CD4-positive, alpha-beta T cell (primary cell): ENCODE measurements at regions of chr10 and their contacts with region 1.

Region 1: DNA sequence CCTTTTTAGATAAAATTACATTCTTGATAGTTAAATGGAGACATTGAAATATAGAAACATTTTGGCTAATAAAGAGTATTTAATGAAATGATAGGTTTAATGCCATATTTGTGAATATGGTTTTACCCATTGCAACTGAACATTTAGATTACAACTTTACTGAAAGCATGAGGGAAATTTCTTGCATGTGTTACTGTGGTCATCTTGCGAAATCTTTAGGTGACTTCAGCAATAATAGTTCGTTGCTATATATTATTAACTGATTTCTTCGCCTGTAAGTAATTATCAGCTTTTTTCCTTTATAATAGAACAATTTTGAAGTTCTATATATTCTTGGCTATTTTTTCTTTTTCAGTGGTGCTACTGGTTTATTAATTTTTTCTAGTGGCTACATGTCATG is 83.2 kb downstream of the MLLT10 start:
- DNase-seq: no peak
- ATAC-seq: no peak
- H3K4me3 ChIP-seq: no peak overlapping the region
- H3K4me3 Mint-ChIP-seq: no peak overlapping the region
- H3K27ac ChIP-seq: no peak overlapping the region
- H3K27ac Mint-ChIP-seq: no peak overlapping the region
- H3K4me1 ChIP-seq: peaks cover 7% of the 10 kb centered on the region
- H3K4me1 Mint-ChIP-seq: peaks cover 20% of the 10 kb centered on the region
- H3K27me3 ChIP-seq: no peaks in the 10 kb centered on the region
- H3K27me3 Mint-ChIP-seq: no peaks in the 10 kb centered on the region
- CTCF ChIP-seq: no peak

Region 2: GRCh38 chr10:21556527-21556926 is 60.7 kb before region 1 on chr10:
- CTCF ChIA-PET with region 1: no interaction called
- POLR2A ChIA-PET with region 1: no interaction called
- intact Hi-C with region 1: loop called in 1 of 2 experiments (anchors 10 kb)
- DNase-seq: no peak
- ATAC-seq: no peak
- H3K4me3 ChIP-seq: no peak overlapping the region
- H3K4me3 Mint-ChIP-seq: no peak overlapping the region
- H3K27ac ChIP-seq: no peak overlapping the region
- H3K27ac Mint-ChIP-seq: no peak overlapping the region
- H3K4me1 ChIP-seq: no peaks in the 10 kb centered on the region
- H3K4me1 Mint-ChIP-seq: peaks cover 45% of the 10 kb centered on the region
- H3K27me3 ChIP-seq: no peaks in the 10 kb centered on the region
- H3K27me3 Mint-ChIP-seq: no peaks in the 10 kb centered on the region
- CTCF ChIP-seq: no peak

Region 3: DNA sequence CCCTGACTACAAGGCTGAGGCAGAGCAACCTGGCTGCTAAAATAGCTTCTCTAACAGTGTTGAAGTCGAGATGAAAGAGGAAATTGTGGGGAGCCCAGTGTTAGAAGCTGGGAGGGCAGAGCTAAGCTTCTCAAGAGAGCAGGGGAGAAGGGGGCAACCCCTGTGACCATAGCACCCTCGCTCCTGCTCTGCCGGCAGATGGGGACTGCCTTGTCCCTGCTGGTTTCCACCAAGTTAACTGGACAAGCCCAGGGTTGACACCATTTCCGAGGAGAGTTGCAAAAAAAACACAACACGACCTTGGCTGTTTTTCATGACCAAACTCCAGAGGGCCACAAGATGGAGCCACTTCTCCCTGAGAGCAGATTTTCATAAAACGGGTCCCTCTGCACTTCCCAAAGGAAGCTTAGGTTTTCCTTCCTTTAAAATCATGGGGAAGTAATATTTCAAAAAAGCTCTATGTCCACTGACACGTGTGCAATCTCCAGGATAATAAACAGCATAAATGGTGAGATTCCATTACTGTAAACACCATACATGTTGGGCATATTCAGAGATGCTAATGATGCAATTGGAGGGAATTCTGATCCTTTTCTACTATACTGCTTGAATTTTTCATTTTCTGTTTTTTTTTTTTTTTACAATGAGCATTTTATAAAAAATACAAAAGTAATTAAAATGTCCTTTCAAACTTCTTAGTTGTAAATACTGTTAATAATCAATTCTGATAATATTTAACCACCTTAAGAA is 956.7 kb after region 1 on chr10:
- CTCF ChIA-PET with region 1: no interaction called
- POLR2A ChIA-PET with region 1: no interaction called
- intact Hi-C with region 1: no loop called
- DNase-seq: peak in 6 of 14 experiments; percentile 8 to 69 (median 50)
- ATAC-seq: peak; percentile 37
- H3K4me3 ChIP-seq: no peak overlapping the region
- H3K4me3 Mint-ChIP-seq: no peak overlapping the region
- H3K27ac ChIP-seq: no peak overlapping the region
- H3K27ac Mint-ChIP-seq: peak overlapping the region; percentile 75
- H3K4me1 ChIP-seq: peaks cover 14% of the 10 kb centered on the region
- H3K4me1 Mint-ChIP-seq: peaks cover 67% of the 10 kb centered on the region
- H3K27me3 ChIP-seq: no peaks in the 10 kb centered on the region
- H3K27me3 Mint-ChIP-seq: no peaks in the 10 kb centered on the region
- CTCF ChIP-seq: peak; percentile 73